ENCODE measurements at regions of chr2 and their contacts with region 1.

Region 1: GRCh38 chr2:28166956-28167355 is 225.7 kb upstream of the FOSL2 start:
- DNase-seq: no peak
- H3K4me3 ChIP-seq: no peak overlapping the region
- CTCF ChIP-seq: no peak

Region 2: GRCh38 chr2:28052691-28053090 is 114.3 kb before region 1 on chr2:
- in situ Hi-C with region 1: loop called (anchors 5 kb)
- DNase-seq: no peak
- H3K4me3 ChIP-seq: no peak overlapping the region
- CTCF ChIP-seq: no peak

Region 3: GRCh38 chr2:28102455-28102874 is 64.5 kb before region 1 on chr2:
- in situ Hi-C with region 1: no loop called
- DNase-seq: peak; percentile 86
- H3K4me3 ChIP-seq: no peak overlapping the region
- CTCF ChIP-seq: no peak

Region 4: DNA sequence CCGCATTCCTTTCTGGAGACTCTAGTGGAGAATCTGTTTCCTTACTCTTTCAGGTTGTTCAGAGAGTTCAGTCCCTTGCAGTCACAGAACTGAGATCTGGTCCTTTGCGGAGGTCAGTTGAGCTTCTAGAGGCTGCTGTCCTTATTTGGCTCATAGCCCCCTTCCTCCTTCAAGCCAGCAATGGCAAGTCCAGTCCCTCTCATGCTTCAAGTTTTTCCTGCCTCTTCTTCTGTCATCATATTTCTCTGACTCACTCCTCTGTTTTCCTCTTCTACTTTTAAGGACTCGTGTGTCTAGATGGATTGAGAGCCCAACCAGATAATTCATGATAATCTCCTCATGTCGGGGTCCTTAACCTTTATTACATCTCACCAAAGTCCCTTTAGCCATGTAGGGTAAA is 52.2 kb after region 1 on chr2:
- in situ Hi-C with region 1: loop called (anchors 5 kb)
- DNase-seq: no peak
- H3K4me3 ChIP-seq: no peak overlapping the region
- CTCF ChIP-seq: no peak